ENCODE measurements at regions of chr9 and their contacts with region 1.

Region 1: GRCh38 chr9:14136646-14137370 is 177.1 kb downstream of the NFIB start:
- DNase-seq: no peak
- ATAC-seq: no peak
- H3K4me3 ChIP-seq: no peak overlapping the region
- H3K4me3 Mint-ChIP-seq: no peak overlapping the region
- H3K27ac ChIP-seq: no peak overlapping the region
- H3K27ac Mint-ChIP-seq: no peak overlapping the region
- H3K4me1 ChIP-seq: no peaks in the 10 kb centered on the region
- H3K4me1 Mint-ChIP-seq: no peaks in the 10 kb centered on the region
- H3K27me3 ChIP-seq: no peaks in the 10 kb centered on the region
- H3K27me3 Mint-ChIP-seq: no peaks in the 10 kb centered on the region
- CTCF ChIP-seq: no peak

Region 2: GRCh38 chr9:14189578-14189977 is 52.8 kb after region 1 on chr9:
- CTCF ChIA-PET with region 1: no interaction called
- POLR2A ChIA-PET with region 1: no interaction called
- intact Hi-C with region 1: loop called in 1 of 2 experiments (anchors 5 kb)
- DNase-seq: no peak
- ATAC-seq: no peak
- H3K4me3 ChIP-seq: no peak overlapping the region
- H3K4me3 Mint-ChIP-seq: no peak overlapping the region
- H3K27ac ChIP-seq: no peak overlapping the region
- H3K27ac Mint-ChIP-seq: no peak overlapping the region
- H3K4me1 ChIP-seq: no peaks in the 10 kb centered on the region
- H3K4me1 Mint-ChIP-seq: no peaks in the 10 kb centered on the region
- H3K27me3 ChIP-seq: no peaks in the 10 kb centered on the region
- H3K27me3 Mint-ChIP-seq: no peaks in the 10 kb centered on the region
- CTCF ChIP-seq: no peak

Region 3: DNA sequence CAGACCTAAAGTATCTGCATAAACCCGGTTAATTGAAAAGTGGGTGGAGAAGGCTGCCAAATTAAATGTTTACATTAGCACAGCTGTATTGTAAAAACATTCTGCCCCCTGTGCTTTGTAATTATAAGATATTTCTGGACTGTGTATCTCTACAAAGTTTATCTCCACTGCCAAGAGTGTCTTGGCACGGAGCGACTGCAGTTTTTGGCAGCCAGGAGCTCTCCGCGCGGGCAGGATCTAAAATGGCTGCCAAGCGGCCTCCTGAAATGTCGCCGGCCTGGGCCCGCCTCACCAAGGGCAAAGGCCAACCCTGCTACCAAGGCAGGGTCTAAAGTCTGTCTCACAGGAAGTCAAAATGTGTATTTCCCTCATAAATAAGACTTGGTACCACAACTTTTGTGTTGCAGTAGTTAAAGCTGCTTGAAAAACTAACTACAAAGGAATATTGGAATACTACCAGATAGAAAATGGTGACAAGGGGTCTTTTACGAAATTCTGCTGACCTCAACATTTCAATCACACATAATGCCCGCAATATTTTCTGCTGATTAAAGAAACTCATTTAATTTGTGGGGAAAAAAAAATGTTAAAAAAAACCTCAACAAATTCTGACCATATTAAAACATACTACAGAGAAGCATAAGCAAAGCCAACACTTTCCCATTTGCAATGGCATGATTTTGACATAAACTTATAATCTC is 66.7 kb after region 1 on chr9:
- CTCF ChIA-PET with region 1: no interaction called
- POLR2A ChIA-PET with region 1: no interaction called
- intact Hi-C with region 1: loop called in 1 of 2 experiments (anchors 10 kb)
- DNase-seq: no peak
- ATAC-seq: no peak
- H3K4me3 ChIP-seq: no peak overlapping the region
- H3K4me3 Mint-ChIP-seq: no peak overlapping the region
- H3K27ac ChIP-seq: no peak overlapping the region
- H3K27ac Mint-ChIP-seq: no peak overlapping the region
- H3K4me1 ChIP-seq: no peaks in the 10 kb centered on the region
- H3K4me1 Mint-ChIP-seq: no peaks in the 10 kb centered on the region
- H3K27me3 ChIP-seq: no peaks in the 10 kb centered on the region
- H3K27me3 Mint-ChIP-seq: no peaks in the 10 kb centered on the region
- CTCF ChIP-seq: no peak

Measured in CD8-positive, alpha-beta T cell (primary cell).